GM10248 (cell line): ENCODE measurements at regions of chr13 and their contacts with region 1.

Region 1: GRCh38 chr13:19631491-19631890 is 2.0 kb upstream of the MPHOSPH8 start:
- DNase-seq: no peak
- CTCF ChIP-seq: no peak

Region 2: GRCh38 chr13:19618925-19619324 is 12.6 kb before region 1 on chr13:
- CTCF ChIA-PET with region 1: interaction called, 16 read pairs
- POLR2A ChIA-PET with region 1: no interaction called
- DNase-seq: peak; percentile 49
- CTCF ChIP-seq: no peak